ENCODE measurements at regions of chr16 and their contacts with region 1.

Region 1: DNA sequence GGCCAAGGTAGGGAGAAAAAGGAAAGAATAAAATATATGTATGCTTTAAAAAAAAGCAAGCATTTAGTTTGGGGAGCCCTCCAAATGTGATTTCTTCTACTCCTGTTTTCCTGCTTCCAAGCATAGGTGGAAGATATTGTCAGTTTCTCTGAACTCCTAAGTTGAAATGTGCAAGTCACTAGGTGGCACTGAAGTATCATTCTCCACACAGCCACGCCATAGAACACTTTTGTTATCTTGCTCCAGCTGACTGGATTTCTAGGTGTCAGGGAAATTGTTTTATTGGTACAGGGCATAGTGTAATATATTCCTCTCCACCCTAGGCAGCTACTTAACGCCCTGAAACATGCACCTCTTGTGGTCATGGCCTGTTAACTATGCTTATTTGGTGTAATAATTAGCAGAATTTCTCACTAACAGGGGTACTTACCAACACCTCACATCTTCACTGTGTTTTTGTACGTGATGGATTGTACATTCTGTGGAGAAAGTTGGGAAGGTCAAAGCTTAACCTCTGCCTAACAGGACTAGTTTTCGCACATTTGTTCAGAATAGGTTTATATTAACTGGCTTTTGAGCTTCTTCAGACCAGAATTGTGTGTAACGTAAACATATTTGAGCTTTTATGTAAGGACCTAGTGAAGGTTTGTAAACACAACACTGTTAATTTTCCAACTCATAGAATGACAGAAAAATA is 69.3 kb downstream of the FTO start:
- DNase-seq: no peak
- H3K4me3 ChIP-seq: no peak overlapping the region
- H3K27ac ChIP-seq: peak overlapping the region in 1 of 2 donors; percentile 6
- H3K4me1 ChIP-seq: peaks cover 0 to 95% (median 52%) of the 10 kb centered on the region in 4 donors
- H3K27me3 ChIP-seq: no peaks in the 10 kb centered on the region
- CTCF ChIP-seq: peak; percentile 51 to 56

Region 2: DNA sequence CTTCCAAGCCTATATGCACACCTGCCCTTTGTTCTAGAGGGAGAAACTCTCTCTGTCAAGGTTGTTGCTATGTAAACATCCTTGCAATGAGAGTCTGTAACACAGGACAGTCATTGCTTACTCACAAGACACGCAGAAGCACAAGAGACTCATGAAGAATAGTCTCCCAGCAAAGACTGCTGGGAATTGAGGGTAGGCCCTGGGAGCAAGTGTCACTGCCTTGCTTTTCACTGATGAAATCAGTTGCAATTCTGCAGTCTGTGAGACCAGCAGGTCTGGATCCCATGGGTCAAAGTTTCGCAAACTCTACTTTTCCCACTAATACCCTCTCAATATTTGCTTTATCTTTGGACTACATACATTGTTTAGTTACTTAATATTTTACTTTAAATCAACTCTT is 108.1 kb after region 1 on chr16:
- intact Hi-C with region 1: loop called (anchors 10 kb)
- DNase-seq: no peak
- H3K4me3 ChIP-seq: no peak overlapping the region
- H3K27ac ChIP-seq: peak overlapping the region in 1 of 2 donors; percentile 47
- H3K4me1 ChIP-seq: peaks cover 0 to 38% (median 16%) of the 10 kb centered on the region in 4 donors
- H3K27me3 ChIP-seq: no peaks in the 10 kb centered on the region
- CTCF ChIP-seq: no peak